GM12878 (cell line): ENCODE measurements at regions of chr11 and their contacts with region 1.

Region 1: GRCh38 chr11:60831143-60831500 is 10.8 kb upstream of the CCDC86 start:
- DNase-seq: peak; percentile 26
- ATAC-seq: peak; percentile 98
- H3K4me3 ChIP-seq: no peak overlapping the region
- H3K27ac ChIP-seq: no peak overlapping the region
- H3K4me1 ChIP-seq: no peaks in the 10 kb centered on the region; the same call in 1 of the 2 replicates
- H3K27me3 ChIP-seq: no peaks in the 10 kb centered on the region; a peak in 2 of 4 replicates
- CTCF ChIP-seq: peak; percentile 94 to 95 (median 95)
- EP300 ChIP-seq: no peak
- POLR2A ChIP-seq: no peak
- RAD21 ChIP-seq: peak; percentile 96

Region 2: GRCh38 chr11:60775420-60775961 is 55.6 kb before region 1 on chr11:
- CTCF ChIA-PET with region 1: interaction called, 35 read pairs
- POLR2A ChIA-PET with region 1: no interaction called
- RAD21 ChIA-PET with region 1: interaction called, 13 read pairs
- SMC1A ChIA-PET with region 1: interaction called, 49 read pairs
- in situ Hi-C with region 1: no loop called
- intact Hi-C with region 1: loop called (anchors 2 kb)
- DNase-seq: peak; percentile 67
- ATAC-seq: peak; percentile 94
- H3K4me3 ChIP-seq: no peak overlapping the region
- H3K27ac ChIP-seq: no peak overlapping the region
- H3K4me1 ChIP-seq: peaks cover 11% of the 10 kb centered on the region
- H3K27me3 ChIP-seq: no peaks in the 10 kb centered on the region
- CTCF ChIP-seq: peak; percentile 86 to 94 (median 89)
- EP300 ChIP-seq: no peak
- POLR2A ChIP-seq: no peak
- RAD21 ChIP-seq: peak; percentile 81

Region 3: DNA sequence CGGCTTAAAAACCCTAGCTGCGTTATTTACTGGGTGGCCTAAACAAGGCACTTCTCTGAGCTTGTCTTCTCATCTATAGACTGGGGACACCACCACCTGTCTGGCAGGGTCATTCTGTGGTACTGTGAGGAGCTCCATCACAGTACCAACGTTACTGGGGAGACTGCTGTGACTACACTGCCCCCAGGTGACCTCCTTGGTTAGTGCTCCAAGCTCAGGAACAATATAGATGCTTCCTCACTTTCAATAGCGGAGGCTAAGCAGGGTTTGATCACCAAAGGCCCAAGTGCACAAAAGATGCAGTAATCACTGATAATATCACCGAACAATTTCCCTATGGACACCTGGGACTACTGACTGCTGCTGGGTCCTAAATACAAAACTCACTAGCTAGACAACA is 56.4 kb after region 1 on chr11:
- CTCF ChIA-PET with region 1: interaction called, 108 read pairs
- POLR2A ChIA-PET with region 1: no interaction called
- RAD21 ChIA-PET with region 1: interaction called, 46 read pairs
- SMC1A ChIA-PET with region 1: interaction called, 50 read pairs
- in situ Hi-C with region 1: no loop called
- intact Hi-C with region 1: loop called (anchors 1 kb)
- DNase-seq: no peak
- ATAC-seq: peak; percentile 93
- H3K4me3 ChIP-seq: no peak overlapping the region
- H3K27ac ChIP-seq: no peak overlapping the region
- H3K4me1 ChIP-seq: no peaks in the 10 kb centered on the region
- H3K27me3 ChIP-seq: no peaks in the 10 kb centered on the region
- CTCF ChIP-seq: peak; percentile 47 to 61 (median 58); a peak in 5 of 6 replicates
- EP300 ChIP-seq: no peak
- POLR2A ChIP-seq: no peak
- RAD21 ChIP-seq: peak; percentile 73

Region 4: DNA sequence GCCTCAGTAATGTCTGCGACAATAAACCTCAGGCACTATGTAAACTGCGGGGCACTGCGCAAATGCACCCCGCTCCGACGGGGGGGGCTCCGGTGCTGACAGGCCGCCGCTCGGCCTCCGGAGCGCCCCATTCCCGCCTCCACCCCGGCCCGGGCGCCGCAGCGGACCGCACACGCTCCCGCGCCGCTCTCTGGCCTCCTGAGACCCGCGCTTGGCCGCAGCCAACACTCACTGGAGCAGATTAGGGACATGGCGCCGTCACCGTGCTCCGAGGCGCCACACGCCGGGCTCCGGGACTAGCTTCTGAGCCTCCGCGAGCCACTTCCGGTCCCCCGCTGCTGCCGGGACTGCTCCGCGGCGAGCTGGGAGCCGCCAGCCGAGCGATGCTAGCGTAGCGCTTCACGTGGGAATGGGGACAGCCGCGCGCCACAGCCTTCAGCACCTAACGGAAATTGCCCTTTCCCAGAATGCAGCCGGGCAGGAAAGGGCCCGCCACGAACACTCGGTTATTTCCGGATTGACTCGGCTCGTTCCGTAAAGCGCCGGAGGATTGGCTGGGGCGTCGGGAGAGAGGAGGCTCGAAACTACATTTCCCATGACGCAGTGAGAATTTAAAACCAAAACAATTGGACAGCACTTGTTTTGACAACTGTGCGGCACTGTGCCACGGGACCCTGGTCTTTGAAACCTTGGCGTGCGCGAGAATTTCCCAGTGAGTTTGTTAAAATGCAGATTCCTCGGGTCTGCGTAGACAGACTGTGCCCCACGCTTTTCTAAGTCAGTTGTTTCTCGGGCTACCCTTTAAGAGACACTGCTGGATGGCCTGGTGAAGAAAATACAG is 75.2 kb after region 1 on chr11 and contains the start of gene PRPF19:
- CTCF ChIA-PET with region 1: interaction called, 135 read pairs
- POLR2A ChIA-PET with region 1: no interaction called
- RAD21 ChIA-PET with region 1: interaction called, 15 read pairs
- SMC1A ChIA-PET with region 1: interaction called, 57 read pairs
- in situ Hi-C with region 1: no loop called
- intact Hi-C with region 1: no loop called
- DNase-seq: peak; percentile 93
- ATAC-seq: peak; percentile 87
- H3K4me3 ChIP-seq: peak within 1 kb of the TSS; percentile 86
- H3K27ac ChIP-seq: peak within 1 kb of the TSS; percentile 89
- H3K4me1 ChIP-seq: peaks cover 36% of the 10 kb centered on the region
- H3K27me3 ChIP-seq: no peaks in the 10 kb centered on the region
- CTCF ChIP-seq: no peak
- EP300 ChIP-seq: 0 out of 4 replicates have a peak, but pooled peaks of 1 of the 2 experiments have one; percentile 34
- POLR2A ChIP-seq: peak; percentile 99
- RAD21 ChIP-seq: no peak
- polyA plus RNA-seq, gene PRPF19: 8.7 to 27.7 TPM

Region 5: GRCh38 chr11:61187505-61188130 is 356.5 kb after region 1 on chr11:
- CTCF ChIA-PET with region 1: interaction called, 54 read pairs
- POLR2A ChIA-PET with region 1: no interaction called
- RAD21 ChIA-PET with region 1: interaction called, 14 read pairs
- SMC1A ChIA-PET with region 1: interaction called, 44 read pairs
- in situ Hi-C with region 1: loop called (anchors 5 kb)
- intact Hi-C with region 1: loop called (anchors 1 kb)
- DNase-seq: peak; percentile 60
- ATAC-seq: peak; percentile 97
- H3K4me3 ChIP-seq: no peak overlapping the region
- H3K27ac ChIP-seq: no peak overlapping the region
- H3K4me1 ChIP-seq: no peaks in the 10 kb centered on the region
- H3K27me3 ChIP-seq: no peaks in the 10 kb centered on the region
- CTCF ChIP-seq: peak; percentile 90 to 98 (median 96); a peak in 5 of 6 replicates
- EP300 ChIP-seq: no peak
- POLR2A ChIP-seq: no peak
- RAD21 ChIP-seq: peak; percentile 98